Heart right ventricle (tissue), 16 donors: ENCODE measurements at regions of chr15 and their contacts with region 1.

Region 1: GRCh38 chr15:90512981-90513380 is 16.7 kb upstream of the CRTC3 start:
- DNase-seq: no peak
- ATAC-seq: peak in 1 of 8 donors; percentile 35
- H3K4me3 ChIP-seq: no peak overlapping the region
- H3K27ac ChIP-seq: peak overlapping the region in 1 of 10 donors; percentile 53
- H3K4me1 ChIP-seq: peaks cover 0 to 24% (median 0%) of the 10 kb centered on the region in 9 donors
- H3K27me3 ChIP-seq: no peaks in the 10 kb centered on the region
- CTCF ChIP-seq: no peak

Region 2: DNA sequence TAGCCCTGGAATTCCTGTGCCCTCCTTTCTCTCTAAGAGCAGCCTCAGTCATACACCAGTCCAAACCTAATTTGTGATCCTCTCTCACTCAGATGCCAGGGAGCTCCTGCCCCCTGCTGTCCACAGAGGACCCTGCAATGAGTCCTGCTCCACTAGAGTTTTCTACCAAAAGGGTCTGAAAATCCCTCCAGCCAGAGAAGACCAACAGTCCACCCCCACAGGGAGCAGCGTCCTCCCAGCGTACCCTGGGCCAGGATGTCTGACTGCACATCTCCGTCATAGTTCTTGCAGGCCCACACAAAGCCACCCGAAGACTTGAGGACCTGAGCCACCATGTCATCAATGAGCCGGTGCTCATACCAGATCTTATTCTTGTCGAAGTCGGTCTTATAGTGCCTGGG is 426.1 kb before region 1 on chr15:
- intact Hi-C with region 1: no loop called
- DNase-seq: no peak
- ATAC-seq: peak in 1 of 8 donors; percentile 14
- H3K4me3 ChIP-seq: no peak overlapping the region
- H3K27ac ChIP-seq: no peak overlapping the region
- H3K4me1 ChIP-seq: peaks cover 0 to 19% (median 0%) of the 10 kb centered on the region in 9 donors
- H3K27me3 ChIP-seq: no peaks in the 10 kb centered on the region
- CTCF ChIP-seq: peak in 8 of 9 donors; percentile 29 to 76 (median 60)

Region 3: DNA sequence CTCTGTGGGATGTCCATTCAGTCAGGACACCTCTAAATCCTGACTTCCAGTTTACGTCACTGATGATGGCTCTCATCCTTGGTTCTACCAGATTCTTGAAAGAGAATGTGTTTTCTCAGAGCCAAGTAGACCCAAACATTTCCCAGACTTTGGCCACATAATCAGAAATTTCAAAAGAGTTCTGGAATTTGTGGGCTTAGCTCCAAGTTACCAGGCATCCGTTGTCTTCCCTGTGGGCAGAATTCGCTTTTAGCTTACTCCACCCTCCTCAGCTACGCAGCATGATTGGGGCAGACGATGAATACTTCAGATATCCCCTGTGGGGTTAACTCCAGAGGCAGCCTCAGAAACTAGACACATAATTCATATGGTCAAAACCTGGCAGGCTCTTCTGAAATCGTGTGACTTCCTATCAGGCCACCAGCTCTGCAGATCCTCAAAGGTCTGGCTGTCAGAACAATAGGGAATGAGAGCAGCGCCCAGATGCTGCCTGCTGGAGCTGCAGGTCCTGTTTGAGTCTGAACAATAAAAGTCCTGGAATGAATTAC is 47.3 kb after region 1 on chr15:
- intact Hi-C with region 1: loop called in 1 of 10 experiments (anchors 2 kb)
- DNase-seq: peak; percentile 48 to 72
- ATAC-seq: peak; percentile 59 to 81 (median 68)
- H3K4me3 ChIP-seq: peak overlapping the region in 1 of 10 donors; percentile 1
- H3K27ac ChIP-seq: peak overlapping the region; percentile 75 to 89 (median 84)
- H3K4me1 ChIP-seq: peaks cover 48 to 99% (median 94%) of the 10 kb centered on the region in 9 donors
- H3K27me3 ChIP-seq: no peaks in the 10 kb centered on the region
- CTCF ChIP-seq: no peak

Region 4: DNA sequence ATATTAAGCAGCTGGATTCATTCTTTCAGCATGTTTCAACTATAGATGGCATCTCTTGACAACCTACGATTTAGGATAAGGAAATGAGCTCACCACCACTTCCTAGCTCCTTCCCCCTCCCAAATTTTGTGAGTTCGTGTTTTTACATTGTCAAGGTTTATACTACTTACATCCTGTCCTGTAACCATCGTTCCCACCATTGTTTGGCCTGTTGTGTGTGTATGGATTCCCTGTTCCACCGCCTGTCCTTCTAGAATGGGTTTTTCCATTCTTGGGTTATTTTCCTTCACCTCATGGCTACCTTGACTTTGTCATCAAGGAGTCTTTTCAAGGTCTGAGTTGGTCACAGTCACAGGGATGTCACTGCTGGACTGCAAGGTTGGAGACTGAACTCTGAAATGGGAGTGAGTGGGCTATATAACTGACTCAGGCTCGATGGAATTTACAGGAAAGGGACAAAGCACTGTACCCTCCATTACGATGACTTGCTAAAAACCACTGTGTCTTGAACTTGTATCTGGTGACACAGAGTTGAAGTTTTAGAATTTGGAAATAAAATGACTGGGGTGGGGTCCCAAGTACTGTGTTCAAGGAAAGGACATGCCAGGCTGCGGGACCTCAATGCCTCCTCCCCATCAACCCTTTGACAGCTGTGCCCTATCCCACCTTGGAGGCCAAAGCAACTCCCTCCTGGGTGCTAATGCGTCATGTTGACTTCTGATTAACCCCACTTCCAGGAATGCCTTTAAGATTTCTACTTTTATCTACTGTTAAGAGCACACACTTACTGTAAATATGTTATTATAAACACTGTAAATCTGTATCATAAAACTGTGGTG is 137.4 kb after region 1 on chr15:
- intact Hi-C with region 1: no loop called
- DNase-seq: no peak
- ATAC-seq: peak in 3 of 8 donors; percentile 11 to 37 (median 32)
- H3K4me3 ChIP-seq: no peak overlapping the region
- H3K27ac ChIP-seq: peak overlapping the region in 7 of 10 donors; percentile 39 to 84 (median 69)
- H3K4me1 ChIP-seq: peaks cover 0 to 46% (median 20%) of the 10 kb centered on the region in 9 donors
- H3K27me3 ChIP-seq: no peaks in the 10 kb centered on the region
- CTCF ChIP-seq: no peak

Region 5: GRCh38 chr15:90691982-90692773 is 179.2 kb after region 1 on chr15:
- intact Hi-C with region 1: loop called in 1 of 10 experiments (anchors 5 kb)
- DNase-seq: no peak
- ATAC-seq: no peak
- H3K4me3 ChIP-seq: no peak overlapping the region
- H3K27ac ChIP-seq: no peak overlapping the region
- H3K4me1 ChIP-seq: peaks cover 0 to under 1% (median 0%) of the 10 kb centered on the region in 9 donors
- H3K27me3 ChIP-seq: no peaks in the 10 kb centered on the region
- CTCF ChIP-seq: no peak